Activated naive CD8-positive, alpha-beta T cell treated with anti-CD3 and anti-CD28 coated beads, Interleukin-2, amount 10 ng/mL, durations not matched to agents 7 days and 5 days (primary cell): ENCODE measurements at regions of chr7 and their contacts with region 1.

Region 1: GRCh38 chr7:93117852-93118530 is at the start of gene SAMD9:
- DNase-seq: no peak
- ATAC-seq: peak; percentile 97
- H3K4me3 Mint-ChIP-seq: peak within 1 kb of the TSS; percentile 97
- H3K27ac Mint-ChIP-seq: peak within 1 kb of the TSS; percentile 93
- H3K4me1 Mint-ChIP-seq: peaks cover 33% of the 10 kb centered on the region
- H3K27me3 Mint-ChIP-seq: no peaks in the 10 kb centered on the region
- total RNA-seq, gene SAMD9: 65.4 to 66.5 TPM

Region 2: DNA sequence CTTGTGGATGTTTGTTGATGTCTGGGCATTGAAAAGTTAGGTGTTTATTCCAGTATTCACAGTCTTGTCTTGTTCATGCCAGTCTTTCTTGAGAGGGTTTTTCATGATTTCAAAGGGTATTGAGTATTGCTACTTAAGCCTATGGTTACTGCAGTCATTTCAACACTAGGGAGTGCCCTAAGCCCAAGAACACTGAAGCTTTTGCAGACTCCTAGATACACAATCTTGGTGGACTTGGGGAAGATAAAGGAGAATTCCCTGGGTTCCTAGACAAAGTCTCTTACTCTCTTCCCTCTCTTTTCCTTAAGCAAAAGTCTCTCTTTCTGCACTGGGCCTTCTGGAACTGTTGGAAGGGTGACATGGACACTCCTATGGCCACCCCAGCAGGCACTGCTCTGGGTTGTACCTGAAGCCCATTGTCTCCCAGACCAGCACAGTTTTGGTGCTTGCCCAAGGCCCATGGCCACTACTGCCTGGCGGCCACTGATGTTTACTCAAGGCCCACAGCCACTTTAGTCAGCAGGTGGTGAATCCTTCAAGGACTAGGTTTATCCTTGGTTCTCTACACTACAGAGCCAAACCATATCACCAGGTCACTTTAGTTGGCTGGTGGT is 25.1 kb before region 1 on chr7:
- POLR2A ChIA-PET with region 1: no interaction called
- DNase-seq: no peak
- ATAC-seq: no peak
- H3K4me3 Mint-ChIP-seq: no peak overlapping the region
- H3K27ac Mint-ChIP-seq: no peak overlapping the region
- H3K4me1 Mint-ChIP-seq: no peaks in the 10 kb centered on the region
- H3K27me3 Mint-ChIP-seq: peaks cover 33% of the 10 kb centered on the region

Region 3: GRCh38 chr7:93147363-93147762 is 29.4 kb after region 1 on chr7:
- POLR2A ChIA-PET with region 1: interaction called, 39 read pairs
- DNase-seq: peak; percentile 32
- ATAC-seq: peak; percentile 91
- H3K4me3 Mint-ChIP-seq: peak overlapping the region; percentile 97
- H3K27ac Mint-ChIP-seq: peak overlapping the region; percentile 93
- H3K4me1 Mint-ChIP-seq: peaks cover 41% of the 10 kb centered on the region
- H3K27me3 Mint-ChIP-seq: no peaks in the 10 kb centered on the region

Region 4: DNA sequence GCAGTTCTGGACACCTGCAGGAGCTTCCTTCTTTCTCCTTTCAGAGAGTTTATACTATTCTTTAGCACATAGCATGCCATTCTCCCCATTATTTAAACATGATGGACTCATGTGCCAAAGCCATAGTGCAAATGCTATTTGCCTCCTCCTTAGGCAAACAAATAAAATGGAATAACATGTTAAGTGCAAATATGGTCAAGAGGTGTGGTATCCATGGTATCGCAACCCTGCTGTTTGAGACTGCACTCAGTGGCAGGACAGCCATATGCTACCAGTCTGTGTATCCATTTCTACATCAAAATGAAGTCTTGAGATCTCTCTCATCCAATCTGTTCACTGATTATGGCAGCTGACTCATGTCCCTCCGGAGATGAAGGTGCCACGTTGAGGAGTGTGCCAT is 85.5 kb after region 1 on chr7:
- POLR2A ChIA-PET with region 1: no interaction called
- DNase-seq: no peak
- ATAC-seq: no peak
- H3K4me3 Mint-ChIP-seq: no peak overlapping the region
- H3K27ac Mint-ChIP-seq: no peak overlapping the region
- H3K4me1 Mint-ChIP-seq: no peaks in the 10 kb centered on the region
- H3K27me3 Mint-ChIP-seq: peaks cover 39% of the 10 kb centered on the region

Region 5: GRCh38 chr7:93238748-93239147 is 120.8 kb after region 1 on chr7:
- POLR2A ChIA-PET with region 1: no interaction called
- DNase-seq: no peak
- ATAC-seq: no peak
- H3K4me3 Mint-ChIP-seq: no peak overlapping the region
- H3K27ac Mint-ChIP-seq: no peak overlapping the region
- H3K4me1 Mint-ChIP-seq: peaks cover 2% of the 10 kb centered on the region
- H3K27me3 Mint-ChIP-seq: no peaks in the 10 kb centered on the region